GM13976 (cell line): ENCODE measurements at regions of chr2 and their contacts with region 1.

Region 1: GRCh38 chr2:217785544-217786045 is 217.2 kb downstream of the TNS1 start:
- DNase-seq: peak; percentile 86
- CTCF ChIP-seq: peak; percentile 99

Region 2: DNA sequence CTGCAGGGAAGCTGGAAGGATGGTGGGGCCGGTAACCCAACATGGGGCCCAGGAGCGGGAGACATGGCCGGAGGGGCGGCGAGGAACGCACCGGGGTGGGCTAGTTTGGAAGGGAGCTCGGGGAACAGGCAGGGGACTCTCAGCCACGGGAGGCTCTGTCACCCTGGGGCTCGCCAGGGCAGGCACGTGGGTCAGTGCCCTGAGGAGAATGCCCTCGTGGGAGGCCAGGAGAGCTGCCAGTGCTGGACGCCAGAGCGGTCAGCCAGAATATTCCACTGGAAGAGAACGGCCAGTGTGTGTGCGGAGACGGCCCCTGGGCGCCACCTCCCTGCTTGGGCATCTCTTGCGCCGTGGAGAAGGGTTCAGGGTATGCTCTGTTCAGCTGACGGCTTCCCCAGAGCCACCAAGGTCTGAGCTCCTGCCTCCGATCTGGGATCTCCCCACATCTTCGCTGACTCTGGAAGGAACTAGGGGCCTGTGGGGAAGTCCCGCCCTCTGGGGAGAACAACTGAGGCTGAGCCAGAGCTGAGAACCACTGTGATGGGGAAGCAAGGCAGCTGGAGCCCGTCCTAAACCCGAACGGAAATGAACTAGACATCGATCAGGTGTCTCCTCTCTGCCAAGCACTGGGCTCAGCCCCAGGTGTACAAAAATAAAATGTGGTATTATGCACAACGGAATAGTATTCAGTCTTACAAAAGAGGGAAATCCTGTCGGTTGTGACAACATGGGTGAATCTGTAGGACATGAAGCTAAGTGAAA is 975.0 kb before region 1 on chr2:
- in situ Hi-C with region 1: no loop called
- DNase-seq: no peak
- CTCF ChIP-seq: no peak

Region 3: GRCh38 chr2:217886720-217887309 is 101.2 kb after region 1 on chr2:
- in situ Hi-C with region 1: loop called (anchors 25 kb)
- DNase-seq: peak; percentile 82
- CTCF ChIP-seq: peak; percentile 64

Region 4: GRCh38 chr2:217932799-217933616 is 147.4 kb after region 1 on chr2:
- in situ Hi-C with region 1: no loop called
- DNase-seq: no peak
- CTCF ChIP-seq: no peak

Region 5: GRCh38 chr2:218074031-218074430 is 288.4 kb after region 1 on chr2:
- in situ Hi-C with region 1: loop called (anchors 25 kb)
- DNase-seq: peak; percentile 73
- CTCF ChIP-seq: peak; percentile 58